ENCODE measurements at regions of chr7 and their contacts with region 1.

Region 1: DNA sequence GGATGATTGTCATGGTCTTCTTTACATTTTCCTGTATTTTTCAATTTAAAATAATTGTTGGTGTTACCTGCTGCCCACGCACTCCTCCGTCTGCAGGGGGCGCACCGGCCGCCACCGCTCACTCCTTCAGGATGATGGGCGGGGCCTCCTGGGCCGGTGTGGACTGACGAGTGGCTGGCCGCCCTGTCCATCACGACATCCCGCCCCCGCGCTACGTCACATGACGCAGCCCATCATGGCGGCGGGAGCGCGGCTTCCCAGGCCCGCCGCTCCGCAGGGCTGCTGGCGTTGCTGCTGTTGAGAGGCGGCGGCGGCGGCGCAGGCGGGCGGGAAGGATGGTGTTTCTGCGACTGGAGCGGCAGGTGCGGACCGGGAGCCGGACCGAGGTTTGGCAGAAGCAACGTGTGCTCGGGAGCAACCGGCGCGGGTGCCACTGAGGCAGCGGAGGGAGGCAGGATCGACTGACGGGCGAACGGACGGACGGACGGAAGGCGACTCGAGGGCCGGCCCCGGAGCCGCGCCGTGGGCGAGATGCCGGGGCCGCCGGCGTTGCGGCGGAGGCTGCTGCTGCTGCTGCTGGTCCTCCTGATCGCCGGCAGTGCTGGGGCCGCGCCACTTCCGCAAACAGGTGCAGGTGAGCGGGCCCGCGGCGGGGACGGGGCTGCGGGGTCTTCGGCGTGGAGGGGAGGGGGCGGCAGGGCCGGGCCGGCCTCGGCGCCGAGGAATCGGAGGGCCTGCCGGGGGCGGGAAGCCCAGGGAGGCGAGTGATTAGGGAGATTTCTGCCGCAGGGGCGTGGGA is at the start of gene LMTK2:
- DNase-seq: peak; percentile 96
- H3K4me3 Mint-ChIP-seq: peak within 1 kb of the TSS; percentile 94
- H3K27ac Mint-ChIP-seq: peak within 1 kb of the TSS; percentile 72
- H3K4me1 Mint-ChIP-seq: peaks cover 38% of the 10 kb centered on the region
- H3K27me3 Mint-ChIP-seq: peaks cover 8% of the 10 kb centered on the region
- total RNA-seq, gene LMTK2: 11.4 to 13.1 TPM

Region 2: GRCh38 chr7:97246317-97246716 is 860.5 kb before region 1 on chr7:
- CTCF ChIA-PET with region 1: no interaction called
- intact Hi-C with region 1: no loop called
- DNase-seq: no peak
- H3K4me3 Mint-ChIP-seq: no peak overlapping the region
- H3K27ac Mint-ChIP-seq: no peak overlapping the region
- H3K4me1 Mint-ChIP-seq: no peaks in the 10 kb centered on the region
- H3K27me3 Mint-ChIP-seq: peaks cover 3% of the 10 kb centered on the region

Region 3: GRCh38 chr7:97307521-97308108 is 799.2 kb before region 1 on chr7:
- CTCF ChIA-PET with region 1: no interaction called
- intact Hi-C with region 1: no loop called
- DNase-seq: no peak
- H3K4me3 Mint-ChIP-seq: no peak overlapping the region
- H3K27ac Mint-ChIP-seq: no peak overlapping the region
- H3K4me1 Mint-ChIP-seq: no peaks in the 10 kb centered on the region
- H3K27me3 Mint-ChIP-seq: peaks cover 5% of the 10 kb centered on the region

Region 4: GRCh38 chr7:97872025-97872669 is 234.7 kb before region 1 on chr7 and contains the start of gene ASNS:
- CTCF ChIA-PET with region 1: no interaction called
- intact Hi-C with region 1: loop called (anchors 1 kb)
- DNase-seq: peak; percentile 95
- H3K4me3 Mint-ChIP-seq: peak within 1 kb of the TSS; percentile 88
- H3K27ac Mint-ChIP-seq: peak within 1 kb of the TSS; percentile 93
- H3K4me1 Mint-ChIP-seq: peaks cover 25% of the 10 kb centered on the region
- H3K27me3 Mint-ChIP-seq: no peaks in the 10 kb centered on the region
- total RNA-seq, gene ASNS: 332 to 337 TPM

Region 5: DNA sequence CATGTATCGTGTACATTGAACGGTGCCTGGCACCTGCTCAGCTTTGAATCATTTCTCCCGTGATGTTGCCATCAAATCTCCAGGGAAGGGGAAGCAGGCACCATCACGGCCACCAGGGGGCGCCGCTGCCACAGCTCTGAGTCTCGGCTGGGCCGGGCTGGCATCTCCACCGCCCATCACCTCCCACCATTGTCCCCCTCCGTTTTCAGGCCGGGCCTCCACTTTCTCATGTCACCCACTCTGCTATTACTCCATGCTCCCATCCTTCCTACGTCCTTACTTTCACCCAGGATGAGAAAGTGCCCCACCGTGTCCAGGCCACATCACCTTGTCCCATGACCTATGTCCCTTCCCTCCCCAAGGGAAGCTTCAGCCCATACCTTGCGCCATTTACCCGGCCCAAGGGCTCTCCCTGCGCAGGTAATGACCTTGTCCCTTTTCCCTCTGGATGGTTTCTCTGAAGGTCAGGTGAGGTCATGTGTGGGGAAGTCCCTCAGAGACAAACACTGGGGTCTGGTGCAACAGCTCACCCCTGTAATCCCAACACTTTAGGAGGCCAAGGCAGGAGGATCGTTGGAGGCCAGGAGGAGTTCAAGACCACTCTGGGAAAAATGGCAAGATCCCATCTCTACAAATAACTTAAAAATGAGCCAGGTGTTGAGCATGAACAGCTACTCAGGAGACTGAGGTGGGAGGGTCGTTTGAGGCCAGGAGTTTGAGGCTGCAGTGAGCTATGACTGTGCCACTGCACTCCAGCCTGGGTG is 85.1 kb before region 1 on chr7:
- CTCF ChIA-PET with region 1: interaction called, 16 read pairs
- intact Hi-C with region 1: loop called (anchors 1 kb)
- DNase-seq: peak; percentile 89
- H3K4me3 Mint-ChIP-seq: no peak overlapping the region
- H3K27ac Mint-ChIP-seq: no peak overlapping the region
- H3K4me1 Mint-ChIP-seq: peaks cover 2% of the 10 kb centered on the region
- H3K27me3 Mint-ChIP-seq: peaks cover 3% of the 10 kb centered on the region

Region 6: DNA sequence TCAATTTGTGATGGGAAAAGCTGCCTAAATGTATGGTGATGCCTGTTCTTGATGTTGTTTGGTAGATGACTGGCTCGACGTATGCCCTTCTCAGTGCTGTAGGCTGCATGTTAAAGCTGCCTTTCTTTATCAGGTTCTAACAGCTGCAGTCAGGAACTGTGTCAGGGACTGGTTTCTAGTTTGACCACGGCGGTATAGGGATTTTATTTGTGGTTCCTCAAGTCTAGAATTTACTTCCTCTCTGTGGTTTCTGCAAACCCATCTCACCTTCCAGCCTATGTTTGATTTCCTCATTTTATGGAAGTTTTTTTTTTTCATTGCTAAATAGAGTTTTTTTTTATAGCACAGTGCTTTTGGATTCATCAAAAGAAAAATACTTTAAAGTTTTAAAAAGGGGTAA is 26.3 kb after region 1 on chr7:
- CTCF ChIA-PET with region 1: interaction called, 11 read pairs
- intact Hi-C with region 1: loop called (anchors 1 kb)
- DNase-seq: peak; percentile 41
- H3K4me3 Mint-ChIP-seq: no peak overlapping the region
- H3K27ac Mint-ChIP-seq: no peak overlapping the region
- H3K4me1 Mint-ChIP-seq: peaks cover 48% of the 10 kb centered on the region
- H3K27me3 Mint-ChIP-seq: no peaks in the 10 kb centered on the region

Region 7: DNA sequence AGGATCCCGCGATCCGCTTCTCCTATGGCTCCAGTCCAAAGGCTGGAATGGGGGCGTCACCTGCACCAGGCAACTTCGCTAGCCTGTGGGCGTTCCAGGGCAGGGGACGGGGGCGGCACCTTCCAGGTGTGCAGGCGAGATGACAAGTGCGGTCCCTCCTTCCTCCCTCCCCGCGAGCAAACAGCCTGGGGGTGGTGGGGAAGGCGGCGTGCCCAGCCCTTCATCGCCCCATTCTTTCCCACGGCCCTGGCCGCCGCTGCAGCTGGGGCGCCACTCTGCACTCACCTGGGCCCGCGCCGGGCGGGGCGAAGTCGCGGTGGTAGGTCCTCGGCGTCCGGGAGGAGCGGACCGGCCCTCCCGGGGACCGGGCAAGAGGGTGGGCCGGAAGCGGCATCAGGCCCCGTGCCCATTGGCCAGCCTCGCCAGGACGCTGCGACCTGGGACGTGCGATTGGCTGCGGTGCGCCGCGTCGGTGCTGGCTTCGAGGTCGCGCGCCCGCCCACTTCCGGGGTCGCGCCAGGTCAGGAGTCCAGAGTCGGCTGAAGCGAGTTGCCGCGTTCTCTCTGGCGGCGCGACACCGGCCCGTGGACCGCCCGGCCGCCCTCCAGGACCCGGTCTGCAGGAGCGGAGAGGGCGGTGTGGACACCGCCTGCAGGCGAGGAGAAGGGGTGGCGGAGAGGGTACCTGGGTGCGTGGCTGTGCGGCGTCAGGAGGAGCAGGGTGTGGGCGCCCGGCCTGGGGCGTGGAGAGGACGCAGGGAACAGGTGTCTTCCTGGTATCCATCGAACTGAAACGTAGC is 145.2 kb after region 1 on chr7 and contains the start of gene TECPR1:
- CTCF ChIA-PET with region 1: interaction called, 3 read pairs
- intact Hi-C with region 1: loop called (anchors 1 kb)
- DNase-seq: peak; percentile 90
- H3K4me3 Mint-ChIP-seq: peak within 1 kb of the TSS; percentile 93
- H3K27ac Mint-ChIP-seq: peak within 1 kb of the TSS; percentile 94
- H3K4me1 Mint-ChIP-seq: peaks cover 53% of the 10 kb centered on the region
- H3K27me3 Mint-ChIP-seq: no peaks in the 10 kb centered on the region
- total RNA-seq, gene TECPR1: 29.8 to 36.7 TPM